ENCODE measurements at regions of chr11 and their contacts with region 1.

Region 1: DNA sequence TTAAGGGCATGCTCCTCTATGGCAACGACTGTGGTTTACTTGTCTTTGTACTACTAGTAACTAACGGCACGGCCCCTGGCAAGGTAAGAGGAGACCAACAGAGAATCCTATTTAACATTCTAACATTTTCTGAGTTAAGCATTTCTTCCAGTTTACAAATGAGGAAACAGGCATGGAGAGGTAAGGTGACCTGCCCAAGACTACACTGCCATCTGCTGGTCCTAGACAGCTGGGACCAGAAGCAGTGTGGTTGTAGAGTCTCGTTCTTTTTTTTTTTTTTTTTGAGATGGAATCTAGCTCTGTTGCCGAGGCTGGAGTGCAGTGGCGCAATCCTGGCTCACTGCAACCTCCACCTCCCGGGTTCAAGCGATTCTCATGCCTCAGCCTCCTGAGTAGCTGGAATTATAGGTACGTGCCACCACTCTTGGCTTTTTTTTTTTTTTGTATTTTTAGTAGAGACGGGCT is 5.3 kb upstream of the RAPSN start:
- DNase-seq: peak; percentile 37
- ATAC-seq: peak; percentile 97
- H3K4me3 ChIP-seq: no peak overlapping the region
- H3K27ac ChIP-seq: no peak overlapping the region
- H3K4me1 ChIP-seq: no peaks in the 10 kb centered on the region
- H3K27me3 ChIP-seq: no peaks in the 10 kb centered on the region
- CTCF ChIP-seq: peak; percentile 80 to 87 (median 83)
- EP300 ChIP-seq: no peak
- POLR2A ChIP-seq: no peak
- RAD21 ChIP-seq: peak; percentile 81

Region 2: DNA sequence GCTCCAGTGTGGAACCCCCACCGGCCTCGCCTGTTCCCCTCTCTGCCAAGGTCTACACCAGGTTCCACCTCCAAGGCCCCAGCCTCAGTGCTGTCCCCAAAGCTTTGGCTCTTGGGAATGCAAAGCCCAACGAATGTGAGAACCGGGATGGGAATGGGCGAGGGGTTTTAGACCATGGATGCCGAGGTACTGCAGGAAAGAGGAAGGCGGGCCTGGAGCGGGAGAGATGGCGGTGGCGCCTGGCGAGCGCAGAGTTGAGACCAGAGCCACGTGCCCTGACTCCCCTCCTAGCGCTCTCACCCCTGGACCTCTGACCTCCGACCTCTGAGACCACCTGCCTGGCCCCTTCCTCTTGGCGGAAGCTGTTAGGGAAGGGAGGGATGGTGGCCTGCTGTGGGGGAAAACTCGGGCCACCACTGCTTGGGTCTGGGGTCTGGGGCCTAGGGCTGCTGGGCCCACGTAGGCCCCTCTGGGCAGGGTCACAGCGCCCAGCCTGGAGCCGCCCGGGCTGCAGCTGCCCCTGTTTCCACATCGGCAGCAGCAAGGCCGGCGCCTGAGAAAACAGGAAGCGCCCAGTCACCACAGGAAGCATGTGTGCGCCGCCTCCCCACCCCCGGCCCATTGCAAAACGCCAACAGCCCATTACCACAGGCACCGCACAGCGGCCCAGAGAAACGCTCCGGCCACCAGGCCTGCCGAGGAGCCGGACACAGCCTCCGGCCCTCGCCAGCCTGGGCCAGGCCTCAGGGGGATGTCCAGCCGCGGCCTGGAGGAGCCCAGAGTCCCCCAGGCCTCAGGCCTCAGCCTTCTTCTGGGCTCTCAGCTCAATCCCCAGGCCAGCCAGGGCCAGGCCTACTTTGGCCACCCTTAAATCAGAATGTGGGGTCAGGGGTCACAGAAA is 59.6 kb before region 1 on chr11:
- CTCF ChIA-PET with region 1: no interaction called
- POLR2A ChIA-PET with region 1: no interaction called
- RAD21 ChIA-PET with region 1: no interaction called
- SMC1A ChIA-PET with region 1: no interaction called
- in situ Hi-C with region 1: no loop called
- intact Hi-C with region 1: no loop called
- DNase-seq: no peak
- ATAC-seq: peak; percentile 73
- H3K4me3 ChIP-seq: peak overlapping the region; percentile 25; the same call in 1 of the 2 replicates
- H3K27ac ChIP-seq: peak overlapping the region; percentile 93
- H3K4me1 ChIP-seq: peaks cover 51% of the 10 kb centered on the region
- H3K27me3 ChIP-seq: no peaks in the 10 kb centered on the region
- CTCF ChIP-seq: no peak
- EP300 ChIP-seq: no peak
- POLR2A ChIP-seq: peak; percentile 86
- RAD21 ChIP-seq: no peak

Region 3: DNA sequence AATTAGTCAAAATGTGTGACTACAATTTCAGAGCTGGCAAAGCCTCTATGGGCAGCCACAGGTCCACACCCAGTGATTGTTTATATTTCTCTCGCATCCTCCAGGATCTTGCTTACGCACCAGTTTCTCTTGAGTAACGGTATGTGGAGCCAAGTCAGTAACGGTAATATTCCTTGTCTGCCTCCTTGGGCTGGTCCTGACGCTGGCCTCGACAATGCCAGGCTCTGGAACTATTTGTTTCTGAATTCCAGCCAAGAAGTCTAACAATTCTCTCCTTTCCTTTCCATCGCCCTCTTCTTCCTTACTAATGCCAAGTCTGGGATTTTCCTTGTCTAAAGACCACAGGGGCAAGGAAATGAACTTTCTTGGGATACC is 403.9 kb after region 1 on chr11:
- CTCF ChIA-PET with region 1: interaction called, 13 read pairs
- POLR2A ChIA-PET with region 1: no interaction called
- RAD21 ChIA-PET with region 1: no interaction called
- SMC1A ChIA-PET with region 1: no interaction called
- in situ Hi-C with region 1: no loop called
- intact Hi-C with region 1: no loop called
- DNase-seq: no peak
- ATAC-seq: no peak
- H3K4me3 ChIP-seq: no peak overlapping the region
- H3K27ac ChIP-seq: peak overlapping the region; percentile 41; the same call in 1 of the 2 replicates
- H3K4me1 ChIP-seq: peaks cover 66% of the 10 kb centered on the region
- H3K27me3 ChIP-seq: no peaks in the 10 kb centered on the region
- CTCF ChIP-seq: no peak
- EP300 ChIP-seq: no peak
- POLR2A ChIP-seq: no peak
- RAD21 ChIP-seq: no peak

Measured in GM12878 (cell line).